OCI-LY7 (cell line): ENCODE measurements at regions of chr13 and their contacts with region 1.

Region 1: DNA sequence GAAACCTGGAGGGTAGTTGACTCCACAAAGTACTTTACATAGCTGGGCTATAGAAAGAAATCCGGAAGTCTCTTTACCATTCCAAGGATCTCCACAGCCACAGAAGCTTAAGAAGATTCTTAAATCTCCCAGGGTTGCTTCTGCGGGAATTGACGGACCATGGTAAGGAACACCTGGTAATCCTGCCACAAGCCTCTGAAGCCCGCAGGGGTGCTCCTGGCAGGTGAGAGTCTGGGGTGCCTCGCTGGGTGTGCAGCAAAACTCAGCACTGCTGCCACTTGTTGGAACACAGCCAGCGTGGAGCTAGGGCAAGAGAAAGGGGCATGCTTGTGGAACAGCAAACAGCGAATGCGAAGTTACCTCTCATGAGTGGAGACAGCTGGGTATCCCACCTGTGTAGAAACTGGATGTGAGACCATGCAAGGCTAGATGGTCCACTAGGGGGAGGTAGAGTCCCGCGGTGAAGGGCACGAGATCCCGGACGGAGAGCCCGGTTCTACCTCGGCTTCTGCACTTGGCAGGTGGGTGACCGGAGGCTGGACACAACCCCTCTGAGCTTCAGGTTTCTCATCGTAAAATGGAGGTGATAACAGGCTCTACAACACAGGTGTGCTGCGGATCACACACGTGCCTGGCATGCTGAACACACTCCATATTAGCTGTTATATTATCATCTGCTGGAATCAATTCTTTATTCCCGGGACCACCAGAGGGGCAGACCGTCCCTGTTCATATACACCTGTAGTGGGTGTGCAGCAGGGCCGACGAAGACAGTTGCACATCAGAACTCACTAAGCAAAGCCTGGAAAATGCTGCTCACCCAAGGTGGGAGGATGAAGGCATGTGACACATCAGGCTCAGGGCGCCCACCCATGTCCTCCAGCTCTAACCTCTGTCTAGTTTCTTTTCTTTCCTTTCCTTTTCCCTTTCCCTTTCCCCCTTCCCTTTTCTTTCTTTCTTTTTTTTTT is 24.1 kb upstream of the UBAC2 start:
- DNase-seq: peak; percentile 76
- H3K4me3 ChIP-seq: peak overlapping the region; percentile 39
- H3K27ac ChIP-seq: no peak overlapping the region
- H3K4me1 ChIP-seq: peaks cover 30% of the 10 kb centered on the region
- CTCF ChIP-seq: peak; percentile 78

Region 2: DNA sequence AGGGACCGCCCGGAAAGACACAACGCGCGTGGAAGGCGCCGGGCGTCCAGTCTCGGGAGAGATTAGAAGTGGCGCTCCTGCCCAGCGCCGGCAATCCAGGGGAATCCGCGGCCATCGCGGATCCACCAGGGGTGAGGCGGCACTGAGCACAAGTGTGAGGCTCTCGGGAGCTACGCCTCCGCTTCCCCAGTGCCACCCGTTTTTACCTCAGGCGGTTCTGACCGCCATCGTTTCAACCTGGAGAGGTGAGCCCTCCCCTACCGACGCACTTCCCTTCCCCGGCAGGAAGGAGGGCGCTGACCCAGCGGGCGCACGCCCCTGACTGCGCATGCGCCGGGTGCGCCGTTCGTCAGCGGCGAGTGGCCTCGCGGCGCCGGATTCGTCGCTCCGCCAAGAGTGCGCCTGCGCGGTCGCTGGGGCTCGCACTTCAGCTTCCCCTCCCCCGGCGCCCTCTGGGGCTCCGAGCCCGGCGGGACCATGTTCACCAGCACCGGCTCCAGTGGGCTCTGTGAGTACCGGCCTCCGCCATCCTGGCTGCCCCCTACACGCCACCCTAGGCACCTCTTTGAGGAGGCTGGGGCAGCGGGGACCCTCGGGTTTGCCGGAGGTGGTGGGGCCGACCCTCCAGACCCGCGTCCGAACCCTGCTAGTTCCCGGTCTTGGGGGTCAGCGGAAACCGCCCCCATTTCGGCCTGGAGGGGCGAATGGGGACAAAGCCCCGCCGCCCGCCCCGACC is 24.0 kb after region 1 on chr13 and contains the start of gene UBAC2:
- CTCF ChIA-PET with region 1: no interaction called
- POLR2A ChIA-PET with region 1: interaction called, 5 read pairs
- intact Hi-C with region 1: loop called (anchors 2 kb)
- DNase-seq: peak; percentile 92
- H3K4me3 ChIP-seq: peak within 1 kb of the TSS; percentile 87
- H3K27ac ChIP-seq: peak within 1 kb of the TSS; percentile 82
- H3K4me1 ChIP-seq: peaks cover 50% of the 10 kb centered on the region
- CTCF ChIP-seq: no peak
- total RNA-seq, gene UBAC2: 26.8 and 33.4 TPM in 2 replicates

Region 3: DNA sequence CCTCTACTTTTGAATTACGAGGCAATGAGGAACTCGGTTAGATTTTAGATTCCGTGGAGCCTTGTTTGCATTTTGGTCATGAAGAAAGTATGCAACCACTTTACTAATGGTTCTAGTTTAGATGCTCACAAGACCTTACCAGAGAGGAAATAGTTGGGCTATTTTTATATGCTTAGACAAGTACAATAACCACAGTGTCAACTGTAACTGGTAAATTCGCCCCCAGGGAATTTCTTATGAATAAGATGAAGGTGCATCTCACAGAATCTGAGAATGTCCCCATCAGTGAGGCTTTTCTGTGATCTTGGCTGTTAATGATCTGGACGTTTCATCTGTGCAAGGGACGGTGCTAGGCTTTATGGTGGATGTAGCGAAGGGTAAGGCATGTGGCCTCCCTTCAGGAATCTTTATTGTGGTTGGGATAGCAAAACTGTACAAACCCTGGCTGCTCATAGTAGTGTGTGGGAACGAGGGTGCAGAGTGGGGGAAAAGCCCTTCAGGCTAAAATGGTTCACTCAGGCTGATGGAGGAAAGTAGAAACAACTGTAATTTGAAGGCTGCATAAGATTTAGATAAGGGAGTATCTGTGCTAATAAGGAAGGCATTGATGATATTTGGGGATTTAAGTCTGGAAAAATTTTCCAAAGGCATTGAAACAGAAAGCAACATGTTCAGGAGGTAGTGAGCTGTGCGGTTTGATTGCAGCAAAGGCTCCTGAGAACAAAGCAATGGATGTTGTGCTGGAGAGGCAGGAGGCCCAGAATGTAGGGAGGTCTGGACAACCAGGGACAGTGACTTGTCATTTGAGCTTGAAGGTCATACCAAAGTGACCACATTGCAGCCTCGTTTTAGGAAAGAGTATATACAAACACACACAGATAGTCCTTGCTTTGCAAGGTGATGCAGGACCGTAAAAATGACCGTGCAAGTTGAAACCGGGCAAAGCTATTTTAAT is 52.4 kb after region 1 on chr13:
- CTCF ChIA-PET with region 1: no interaction called
- POLR2A ChIA-PET with region 1: no interaction called
- intact Hi-C with region 1: loop called (anchors 2 kb)
- DNase-seq: peak; percentile 95
- H3K4me3 ChIP-seq: peak overlapping the region; percentile 58
- H3K27ac ChIP-seq: peak overlapping the region; percentile 97
- H3K4me1 ChIP-seq: peaks cover 85% of the 10 kb centered on the region
- CTCF ChIP-seq: no peak

Region 4: GRCh38 chr13:99366075-99366987 is 189.7 kb after region 1 on chr13:
- CTCF ChIA-PET with region 1: no interaction called
- POLR2A ChIA-PET with region 1: no interaction called
- intact Hi-C with region 1: no loop called
- DNase-seq: no peak
- H3K4me3 ChIP-seq: no peak overlapping the region
- H3K27ac ChIP-seq: no peak overlapping the region
- H3K4me1 ChIP-seq: no peaks in the 10 kb centered on the region
- CTCF ChIP-seq: no peak

Region 5: DNA sequence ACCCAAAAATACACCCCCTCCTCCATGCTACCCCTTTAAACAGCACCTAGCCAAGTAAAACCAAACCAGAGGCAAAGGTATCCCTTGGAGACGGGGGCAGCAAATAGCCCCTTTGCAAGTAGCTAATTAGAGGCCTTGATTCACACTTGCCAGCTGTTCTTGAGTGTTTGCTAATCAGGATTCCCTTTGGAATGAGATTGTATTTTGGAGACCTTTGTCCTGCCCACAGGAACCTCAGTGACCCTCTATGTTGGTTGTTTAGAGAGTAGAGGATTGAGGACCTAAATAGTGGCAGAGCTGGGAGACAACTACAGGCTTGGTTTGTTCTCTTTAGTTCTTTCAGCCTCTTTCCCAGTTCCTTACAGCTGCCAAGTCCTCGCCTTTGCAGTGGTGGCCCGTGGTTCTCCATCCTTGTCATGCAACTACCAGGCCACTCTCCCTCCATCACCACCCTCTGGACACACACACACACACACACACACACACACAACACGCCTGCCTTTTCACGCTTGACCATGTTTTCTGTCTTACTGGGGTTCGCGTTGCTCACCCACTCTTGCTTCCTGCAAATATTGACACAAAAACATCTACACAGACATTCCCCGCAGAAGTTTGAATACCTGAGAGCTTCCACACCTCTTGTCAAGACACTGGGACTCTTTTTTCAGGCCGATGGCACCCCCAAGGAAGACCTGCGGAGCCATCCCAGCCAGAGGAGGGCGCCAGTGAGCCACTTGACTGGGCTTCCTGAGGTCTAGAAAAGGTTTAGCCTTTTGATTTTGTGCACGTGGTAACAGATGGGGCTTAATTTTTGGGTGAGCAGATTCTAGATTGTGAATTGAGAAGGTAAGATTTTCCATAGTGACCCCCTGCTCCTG is 210.6 kb after region 1 on chr13:
- CTCF ChIA-PET with region 1: no interaction called
- POLR2A ChIA-PET with region 1: no interaction called
- intact Hi-C with region 1: loop called (anchors 5 kb)
- DNase-seq: peak; percentile 72
- H3K4me3 ChIP-seq: no peak overlapping the region
- H3K27ac ChIP-seq: no peak overlapping the region
- H3K4me1 ChIP-seq: peaks cover 3% of the 10 kb centered on the region
- CTCF ChIP-seq: peak; percentile 88

Region 6: DNA sequence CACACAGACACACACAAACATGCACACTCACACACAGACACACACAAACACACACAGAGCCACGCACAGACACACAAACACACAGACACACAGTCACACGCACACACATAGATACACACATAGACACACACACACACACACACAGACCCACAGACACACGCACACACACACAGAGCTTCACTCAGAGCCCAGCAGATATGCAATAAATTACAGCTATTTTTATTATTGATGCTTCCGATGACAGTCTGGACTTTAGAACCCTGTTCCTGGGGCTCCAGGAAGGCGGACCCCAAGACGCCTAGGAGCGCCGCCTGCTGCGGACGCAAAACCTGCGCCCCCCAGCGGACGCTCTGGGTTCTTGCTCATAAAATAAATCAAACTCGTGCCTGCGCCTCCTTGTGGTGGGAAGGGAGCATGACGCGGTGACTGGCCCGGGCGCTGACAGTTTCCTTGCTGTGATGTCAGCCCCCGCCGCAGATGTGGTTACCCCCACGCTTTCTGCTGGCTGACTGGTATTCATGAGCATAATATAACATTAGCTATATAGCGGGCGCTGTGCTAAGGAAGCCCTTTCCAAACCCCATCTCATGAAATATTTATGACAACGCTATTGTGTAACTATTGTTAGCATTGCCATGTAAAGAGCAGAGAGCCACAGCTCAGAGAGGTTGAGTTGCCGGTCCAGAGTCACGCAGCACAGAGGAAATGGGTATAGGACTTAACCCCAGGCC is 260.3 kb after region 1 on chr13:
- CTCF ChIA-PET with region 1: interaction called, 5 read pairs
- POLR2A ChIA-PET with region 1: no interaction called
- intact Hi-C with region 1: loop called (anchors 1 kb)
- DNase-seq: peak; percentile 82
- H3K4me3 ChIP-seq: no peak overlapping the region
- H3K27ac ChIP-seq: no peak overlapping the region
- H3K4me1 ChIP-seq: peaks cover 12% of the 10 kb centered on the region
- CTCF ChIP-seq: peak; percentile 97